ENCODE measurements at regions of chr10 and their contacts with region 1.

Region 1: DNA sequence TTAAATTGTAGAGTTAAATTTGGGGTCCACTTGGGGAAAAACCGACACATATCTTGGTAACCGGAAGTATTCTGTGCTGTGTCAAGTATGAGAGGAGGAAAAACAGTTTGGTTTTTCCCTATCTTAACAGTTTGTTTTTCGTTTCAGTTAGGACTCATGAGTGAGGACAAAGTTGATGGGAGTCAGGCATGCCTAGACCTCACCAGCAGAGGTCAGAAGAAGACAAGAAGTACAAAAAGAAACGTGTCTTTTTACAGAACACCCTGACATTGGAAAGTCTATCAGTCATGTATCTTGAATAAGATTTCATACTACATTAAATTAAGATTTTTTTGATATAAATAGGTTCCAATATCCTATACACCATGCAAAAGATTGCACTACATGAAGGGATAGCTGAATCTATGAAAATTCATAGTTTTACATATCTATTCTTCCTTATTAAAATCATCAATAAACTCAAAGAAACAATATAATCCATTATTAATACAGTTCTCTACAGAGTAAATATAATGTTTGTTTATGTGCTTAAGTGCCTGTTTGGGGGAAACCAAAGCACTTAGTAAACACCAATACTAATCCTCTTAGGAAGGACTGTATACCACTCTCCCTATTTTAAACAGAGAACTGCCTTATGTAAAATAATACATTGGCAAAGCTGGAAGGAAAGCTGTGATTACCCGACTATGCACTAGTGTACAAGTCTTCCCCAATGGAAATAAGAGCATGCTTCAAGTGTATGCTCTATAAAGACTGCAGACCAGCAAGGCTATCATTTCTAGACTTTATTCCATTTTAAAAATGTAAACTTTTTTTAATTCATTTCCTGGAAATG is 95.6 kb downstream of the USP6NL start:
- DNase-seq: no peak
- ATAC-seq: peak; percentile 84 to 89

Region 2: GRCh38 chr10:11611248-11612020 is 95.6 kb after region 1 on chr10 and contains the start of gene USP6NL:
- intact Hi-C with region 1: loop called (anchors 5 to 10 kb)
- DNase-seq: peak; percentile 93
- ATAC-seq: peak; percentile 97 to 98
- total RNA-seq, gene USP6NL: 7.9 to 9.2 TPM

Region 3: DNA sequence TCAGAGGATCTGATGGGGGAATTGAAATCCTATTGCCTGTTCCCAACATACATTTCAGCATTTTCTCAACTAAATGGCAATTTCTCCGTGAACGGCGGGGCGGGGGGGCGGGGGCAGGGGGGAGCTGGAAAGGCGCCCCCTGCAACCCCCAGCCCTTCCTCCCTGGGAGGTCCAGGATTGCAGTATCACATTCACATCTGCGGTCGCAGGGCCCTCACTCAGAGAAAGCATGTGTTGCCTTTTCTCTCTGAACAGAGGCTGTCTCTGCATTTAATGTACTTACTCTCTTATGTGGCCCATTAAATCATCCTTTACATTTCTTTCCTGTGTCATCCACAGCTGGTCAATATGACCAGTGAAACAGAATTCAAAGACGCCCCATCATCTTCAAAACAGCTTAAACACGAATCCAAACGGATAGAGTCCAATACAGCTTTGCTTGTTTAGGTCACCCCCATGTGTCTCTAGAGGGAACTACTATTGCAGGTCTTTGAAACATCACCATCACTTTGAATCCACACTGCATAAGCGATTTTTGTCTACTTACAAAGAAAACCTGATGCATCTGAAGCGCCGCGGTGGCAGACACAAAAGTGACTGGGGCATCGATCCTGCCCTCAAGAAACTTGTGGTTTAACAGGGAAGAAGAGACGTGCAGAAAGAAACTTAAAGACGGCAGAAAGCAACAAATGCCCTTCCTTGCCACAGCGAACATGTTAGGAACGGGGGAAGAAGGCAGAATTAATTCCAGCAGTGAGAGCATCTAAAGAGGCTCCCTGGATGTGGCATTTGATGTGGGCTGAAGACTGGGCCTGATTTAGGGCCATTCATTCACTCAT is 209.3 kb after region 1 on chr10:
- intact Hi-C with region 1: loop called (anchors 5 to 10 kb)
- DNase-seq: no peak
- ATAC-seq: peak; percentile 84 to 94

Region 4: DNA sequence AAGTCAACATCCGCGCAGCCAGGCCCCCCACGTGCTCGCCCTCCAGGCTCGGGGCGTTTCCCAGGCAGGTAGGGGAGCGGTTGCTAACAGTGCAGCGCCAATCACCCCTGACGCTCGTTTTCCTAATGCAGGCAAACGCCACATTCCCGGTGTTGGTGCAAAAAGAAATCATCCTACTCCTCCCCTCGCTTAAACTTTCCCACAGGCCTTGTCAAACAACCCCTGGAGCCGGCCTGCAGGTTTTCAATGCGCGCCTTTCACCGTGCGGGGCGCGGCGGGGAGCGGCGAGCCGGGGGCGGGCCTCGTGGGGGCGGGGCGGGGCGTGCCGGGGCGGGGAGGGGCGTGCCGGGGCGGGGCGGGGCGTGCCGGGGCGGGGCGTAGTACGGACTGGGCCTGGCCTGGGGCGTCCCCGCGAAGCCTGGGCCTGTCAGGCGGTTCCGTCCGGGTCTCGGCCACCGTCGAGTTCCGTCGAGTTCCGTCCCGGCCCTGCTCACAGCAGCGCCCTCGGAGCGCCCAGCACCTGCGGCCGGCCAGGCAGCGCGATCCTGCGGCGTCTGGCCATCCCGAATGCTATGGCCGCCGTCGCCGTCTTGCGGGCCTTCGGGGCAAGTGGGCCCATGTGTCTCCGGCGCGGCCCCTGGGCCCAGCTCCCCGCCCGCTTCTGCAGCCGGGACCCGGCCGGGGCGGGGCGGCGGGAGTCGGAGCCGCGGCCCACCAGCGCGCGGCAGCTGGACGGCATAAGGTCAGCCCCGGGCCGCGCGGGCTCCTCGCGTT is 226.4 kb after region 1 on chr10 and contains the start of gene ECHDC3:
- intact Hi-C with region 1: loop called in 1 of 2 experiments (anchors 5 kb)
- DNase-seq: peak; percentile 74
- ATAC-seq: peak; percentile 91 to 93
- total RNA-seq, gene ECHDC3: 55.7 to 56.1 TPM

Region 5: DNA sequence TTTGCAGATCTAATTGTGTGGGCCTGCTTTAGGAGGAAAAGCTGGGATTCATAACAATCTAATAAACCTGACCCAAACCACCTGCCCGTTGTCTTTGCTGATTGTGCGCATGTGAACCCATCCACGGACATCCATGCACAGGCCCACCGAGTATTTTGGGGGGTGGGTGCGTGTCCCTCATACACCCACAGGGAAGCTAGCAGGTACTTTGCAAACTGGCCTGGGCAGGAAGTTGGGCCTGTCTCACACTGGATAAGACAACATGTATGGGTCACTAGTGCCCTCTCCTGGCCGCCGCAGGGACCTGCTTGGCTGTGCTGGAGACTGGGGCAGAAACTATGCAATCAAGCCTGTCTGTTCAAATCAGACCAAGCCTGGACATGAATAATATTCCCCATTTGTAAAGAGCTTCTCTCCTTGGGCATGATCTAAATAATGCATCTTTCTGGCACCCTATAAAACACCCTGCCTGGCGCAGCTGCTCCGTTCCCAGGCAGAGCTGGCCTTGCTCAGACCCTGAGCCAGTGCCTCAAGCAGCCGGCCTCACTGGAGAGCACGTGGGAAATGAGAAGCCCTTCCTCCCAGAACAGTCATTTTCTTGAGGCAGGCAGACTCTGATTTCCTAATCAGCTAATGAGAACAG is 242.1 kb after region 1 on chr10:
- intact Hi-C with region 1: loop called (anchors 2 to 10 kb)
- DNase-seq: peak; percentile 89
- ATAC-seq: peak; percentile 89

Region 6: GRCh38 chr10:11986593-11987216 is 470.9 kb after region 1 on chr10:
- intact Hi-C with region 1: loop called in 1 of 2 experiments (anchors 10 kb)
- DNase-seq: peak; percentile 83
- ATAC-seq: peak; percentile 69 to 79

Region 7: GRCh38 chr10:12279281-12279680 is 763.5 kb after region 1 on chr10:
- intact Hi-C with region 1: no loop called
- DNase-seq: no peak
- ATAC-seq: peak in 1 of 2 donors; percentile 93